Panc1 (cell line): ENCODE measurements at regions of chr20 and their contacts with region 1.

Region 1: DNA sequence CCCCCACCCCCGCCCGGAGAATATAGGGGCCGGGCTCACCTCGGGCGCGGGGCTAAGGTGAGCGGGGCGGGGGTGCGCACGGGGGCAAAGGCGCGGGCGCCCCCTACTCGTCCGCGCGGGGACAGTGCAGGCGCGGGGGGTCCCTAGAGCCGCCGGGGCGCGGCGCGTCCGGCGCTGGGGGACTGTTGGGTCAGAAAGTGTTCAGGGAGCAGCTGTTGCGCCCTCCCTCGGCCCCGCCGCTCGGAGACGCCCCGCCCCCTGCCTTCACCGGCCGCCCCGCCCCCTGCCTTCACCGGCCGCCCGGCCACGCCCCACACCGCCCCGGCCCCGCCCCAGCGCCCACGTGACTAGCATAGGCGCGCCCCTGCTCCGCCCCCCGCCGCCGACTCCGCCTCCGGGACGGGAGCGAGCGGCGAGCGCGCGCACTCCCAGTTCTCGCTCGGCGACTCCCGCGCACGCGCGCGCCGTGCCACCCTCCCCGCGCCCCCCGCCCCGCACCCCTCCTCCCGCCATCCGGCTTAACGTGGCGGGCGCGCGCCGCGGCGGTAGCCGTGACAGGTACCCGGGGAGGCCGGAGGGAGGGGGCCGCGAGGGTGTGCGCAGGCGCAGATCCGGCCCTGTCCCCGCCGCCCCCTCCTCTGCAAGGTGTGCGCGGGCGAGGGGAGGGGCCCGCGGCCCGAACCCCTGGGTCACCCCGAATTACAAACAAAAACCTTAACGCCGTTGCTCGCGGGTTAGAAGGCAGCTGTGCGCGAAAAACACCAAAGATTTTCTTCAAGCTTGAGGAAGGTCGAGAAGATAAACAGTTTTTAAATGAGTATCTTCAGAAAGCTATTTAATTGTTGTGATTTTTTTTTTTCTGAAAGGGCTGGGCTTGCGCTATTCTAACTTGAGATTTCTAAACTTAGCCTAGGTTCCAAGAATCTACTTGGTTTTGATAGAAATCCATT is 704 bp upstream of the ZNF217 start:
- DNase-seq: no peak
- ATAC-seq: peak; percentile 82
- H3K4me3 ChIP-seq: peak overlapping the region; percentile 66 to 67
- H3K27ac ChIP-seq: peak overlapping the region; percentile 98
- H3K4me1 ChIP-seq: peaks cover 18% of the 10 kb centered on the region
- H3K27me3 ChIP-seq: no peaks in the 10 kb centered on the region
- CTCF ChIP-seq: peak; percentile 83

Region 2: GRCh38 chr20:53647286-53647821 is 53.0 kb after region 1 on chr20:
- CTCF ChIA-PET with region 1: no interaction called
- POLR2A ChIA-PET with region 1: interaction called, 10 read pairs
- in situ Hi-C with region 1: no loop called
- intact Hi-C with region 1: no loop called
- DNase-seq: no peak
- ATAC-seq: no peak
- H3K4me3 ChIP-seq: no peak overlapping the region
- H3K27ac ChIP-seq: peak overlapping the region; percentile 99
- H3K4me1 ChIP-seq: peaks cover 34% of the 10 kb centered on the region
- H3K27me3 ChIP-seq: no peaks in the 10 kb centered on the region
- CTCF ChIP-seq: no peak

Region 3: GRCh38 chr20:53738039-53738944 is 143.9 kb after region 1 on chr20:
- CTCF ChIA-PET with region 1: no interaction called
- POLR2A ChIA-PET with region 1: interaction called, 7 read pairs
- in situ Hi-C with region 1: no loop called
- intact Hi-C with region 1: loop called (anchors 10 kb)
- DNase-seq: peak; percentile 88
- ATAC-seq: peak; percentile 78
- H3K4me3 ChIP-seq: peak overlapping the region; percentile 3 to 33
- H3K27ac ChIP-seq: peak overlapping the region; percentile 100
- H3K4me1 ChIP-seq: peaks cover 74% of the 10 kb centered on the region
- H3K27me3 ChIP-seq: no peaks in the 10 kb centered on the region
- CTCF ChIP-seq: no peak

Region 4: DNA sequence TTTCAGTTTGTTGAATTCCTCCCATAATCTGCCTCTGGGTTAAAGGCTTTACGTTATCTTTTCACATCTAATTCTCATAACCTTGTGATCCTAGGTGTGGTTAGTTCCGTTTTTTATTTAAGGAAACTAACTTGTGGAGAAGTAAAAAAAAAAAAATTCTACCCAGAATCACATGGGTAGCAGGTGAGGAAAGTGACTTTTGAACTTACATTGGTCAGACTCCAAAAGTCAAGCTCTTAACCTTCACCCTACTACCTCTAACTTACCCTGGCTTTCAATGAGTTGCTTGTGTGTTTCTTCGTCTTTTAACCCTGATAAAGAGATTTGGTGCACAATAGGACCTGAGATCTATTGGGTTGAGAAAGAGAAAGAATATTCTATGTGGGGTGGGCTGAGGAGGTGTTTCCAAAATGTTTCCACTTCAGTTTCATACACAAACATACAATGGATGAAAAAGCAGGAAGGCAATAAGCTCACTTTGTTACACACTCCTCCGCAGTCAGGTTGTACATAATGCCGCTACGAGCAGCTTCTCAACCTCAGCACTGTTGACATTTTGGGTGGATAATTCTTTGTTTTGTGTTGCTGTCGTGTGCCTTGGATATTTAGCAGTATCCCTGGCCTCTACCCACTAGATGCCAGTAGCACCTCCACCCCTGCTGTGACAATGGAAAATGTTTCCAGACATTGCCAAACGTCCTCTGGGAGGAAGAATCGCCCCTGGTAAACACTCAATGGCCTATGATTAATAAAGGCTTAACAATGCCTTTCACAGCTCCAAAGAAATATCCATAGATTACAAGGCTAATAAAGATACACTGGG is 192.3 kb after region 1 on chr20:
- CTCF ChIA-PET with region 1: no interaction called
- POLR2A ChIA-PET with region 1: interaction called, 15 read pairs
- in situ Hi-C with region 1: no loop called
- intact Hi-C with region 1: no loop called
- DNase-seq: no peak
- ATAC-seq: peak; percentile 72
- H3K4me3 ChIP-seq: peak overlapping the region in 1 of 2 experiments; percentile 5; a peak in 2 of 4 replicates
- H3K27ac ChIP-seq: peak overlapping the region; percentile 100
- H3K4me1 ChIP-seq: peaks cover 59% of the 10 kb centered on the region
- H3K27me3 ChIP-seq: no peaks in the 10 kb centered on the region
- CTCF ChIP-seq: no peak

Region 5: GRCh38 chr20:53934421-53935343 is 340.3 kb after region 1 on chr20:
- CTCF ChIA-PET with region 1: interaction called, 6 read pairs
- POLR2A ChIA-PET with region 1: interaction called, 10 read pairs
- in situ Hi-C with region 1: no loop called
- intact Hi-C with region 1: no loop called
- DNase-seq: no peak
- ATAC-seq: peak; percentile 63; the same call in 1 of the 2 replicates
- H3K4me3 ChIP-seq: no peak overlapping the region
- H3K27ac ChIP-seq: peak overlapping the region; percentile 100
- H3K4me1 ChIP-seq: peaks cover 45% of the 10 kb centered on the region
- H3K27me3 ChIP-seq: no peaks in the 10 kb centered on the region
- CTCF ChIP-seq: no peak